Heart left ventricle (tissue), 16 donors: ENCODE measurements at regions of chr4 and their contacts with region 1.

Region 1: GRCh38 chr4:14910411-14910810 is 91.9 kb upstream of the CPEB2 start:
- DNase-seq: no peak
- ATAC-seq: peak in 2 of 4 donors; percentile 54 to 59
- H3K4me3 ChIP-seq: no peak overlapping the region
- H3K27ac ChIP-seq: no peak overlapping the region
- H3K4me1 ChIP-seq: no peaks in the 10 kb centered on the region
- H3K27me3 ChIP-seq: no peaks in the 10 kb centered on the region
- CTCF ChIP-seq: no peak
- POLR2A ChIP-seq: no peak

Region 2: GRCh38 chr4:14877246-14878225 is 32.9 kb before region 1 on chr4:
- intact Hi-C with region 1: loop called in 1 of 10 experiments (anchors 5 kb)
- DNase-seq: peak in 4 of 5 donors; percentile 30 to 32 (median 31)
- ATAC-seq: peak; percentile 32 to 93 (median 87)
- H3K4me3 ChIP-seq: no peak overlapping the region
- H3K27ac ChIP-seq: peak overlapping the region in 10 of 12 donors; percentile 17 to 68 (median 46)
- H3K4me1 ChIP-seq: peaks cover 0 to 21% (median 11%) of the 10 kb centered on the region in 12 donors
- H3K27me3 ChIP-seq: no peaks in the 10 kb centered on the region
- CTCF ChIP-seq: no peak
- POLR2A ChIP-seq: no peak

Region 3: GRCh38 chr4:15006416-15007024 is 96.1 kb after region 1 on chr4:
- intact Hi-C with region 1: no loop called
- DNase-seq: no peak
- ATAC-seq: no peak
- H3K4me3 ChIP-seq: peak overlapping the region in 8 of 12 donors; percentile 73 to 99 (median 94)
- H3K27ac ChIP-seq: peak overlapping the region in 8 of 12 donors; percentile 98 to 100 (median 100)
- H3K4me1 ChIP-seq: peaks cover 0 to 59% (median 43%) of the 10 kb centered on the region in 12 donors
- H3K27me3 ChIP-seq: no peaks in the 10 kb centered on the region
- CTCF ChIP-seq: peak in 8 of 12 donors; percentile 18 to 53 (median 40)
- POLR2A ChIP-seq: no peak